ENCODE measurements at regions of chr18 and their contacts with region 1.

Region 1: GRCh38 chr18:3245853-3246634 is 1.6 kb upstream of the MYL12A start:
- DNase-seq: peak; percentile 69 to 89 (median 86)
- H3K4me3 ChIP-seq: peak overlapping the region; percentile 22 to 100 (median 94)
- H3K27ac ChIP-seq: peak overlapping the region; percentile 49 to 99 (median 97)
- H3K27me3 ChIP-seq: no peaks in the 10 kb centered on the region
- CTCF ChIP-seq: peak; percentile 79 to 98 (median 94)

Region 2: GRCh38 chr18:2571200-2572143 is 674.6 kb before region 1 on chr18 and contains the starts of genes METTL4 and NDC80:
- intact Hi-C with region 1: loop called in 1 of 2 experiments (anchors 10 kb)
- DNase-seq: peak; percentile 74 to 90 (median 78)
- H3K4me3 ChIP-seq: peak within 1 kb of the TSS; percentile 55 to 97 (median 81)
- H3K27ac ChIP-seq: peak within 1 kb of the TSS; percentile 84 to 100 (median 98)
- H3K27me3 ChIP-seq: peaks cover 0 to 9% (median 0%) of the 10 kb centered on the region in 45 donors
- CTCF ChIP-seq: peak in 19 of 56 donors; percentile 5 to 53 (median 25)
- total RNA-seq, gene METTL4: 6.5 to 24.8 (median 13.3) TPM
- total RNA-seq, gene NDC80: 0.20 to 1.1 (median 0.42) TPM in 12 of 120 experiments, not detected in the others

Region 3: GRCh38 chr18:2655178-2655953 is 590.7 kb before region 1 on chr18 and contains the start of gene SMCHD1:
- intact Hi-C with region 1: loop called in 1 of 2 experiments (anchors 5 kb)
- DNase-seq: peak; percentile 79 to 93 (median 88)
- H3K4me3 ChIP-seq: peak within 1 kb of the TSS; percentile 60 to 100 (median 94)
- H3K27ac ChIP-seq: peak within 1 kb of the TSS; percentile 61 to 97 (median 92)
- H3K27me3 ChIP-seq: no peaks in the 10 kb centered on the region
- CTCF ChIP-seq: peak in 13 of 56 donors; percentile 8 to 51 (median 18)
- total RNA-seq, gene SMCHD1: 43.9 to 86.1 (median 62.2) TPM

Region 4: GRCh38 chr18:2932247-2933181 is 313.5 kb before region 1 on chr18:
- intact Hi-C with region 1: loop called (anchors 1 to 2 kb)
- DNase-seq: peak in 1 of 10 donors; percentile 39
- H3K4me3 ChIP-seq: no peak overlapping the region
- H3K27ac ChIP-seq: peak overlapping the region in 2 of 59 donors; percentile 7 to 41
- H3K27me3 ChIP-seq: no peaks in the 10 kb centered on the region
- CTCF ChIP-seq: peak; percentile 72 to 94 (median 84)

Region 5: DNA sequence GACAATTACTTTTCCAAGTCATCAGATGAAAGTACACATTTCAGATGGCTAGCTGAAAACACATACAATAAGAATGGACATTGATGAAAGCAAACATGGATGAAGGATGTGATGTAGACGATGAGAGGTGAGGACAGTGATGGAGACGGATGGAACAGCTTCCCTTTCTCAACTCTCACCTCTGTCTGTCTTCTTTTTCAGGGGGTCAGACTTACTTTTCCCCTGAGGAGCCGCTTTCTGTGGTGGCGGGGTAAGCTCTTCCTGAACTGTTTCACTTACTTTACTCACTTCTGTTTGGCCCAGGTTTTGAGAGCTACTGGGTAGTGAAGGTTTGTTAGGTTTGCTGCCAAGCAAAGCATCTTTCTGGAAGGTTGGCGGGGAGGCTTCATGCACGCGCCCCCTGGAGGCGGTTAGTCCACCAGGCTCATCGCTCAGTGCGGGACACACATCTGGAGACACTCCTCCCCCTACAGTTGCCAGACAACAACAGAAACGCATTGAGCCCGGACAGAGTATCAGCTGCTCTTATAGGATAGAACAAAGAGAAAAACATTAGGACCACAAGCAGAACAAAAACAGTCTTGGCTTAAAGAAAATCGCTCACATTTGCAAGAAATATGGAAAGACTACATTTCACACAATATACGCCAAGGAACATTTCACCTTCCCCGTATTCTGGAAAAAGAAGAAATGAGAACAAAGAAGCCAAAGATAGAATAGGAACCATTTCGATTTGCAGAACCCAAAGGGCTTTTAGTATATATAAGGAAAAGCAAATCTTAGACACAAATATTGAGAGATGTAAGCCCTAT is 116.8 kb before region 1 on chr18:
- intact Hi-C with region 1: loop called in 1 of 2 experiments (anchors 5 kb)
- DNase-seq: peak; percentile 48 to 95 (median 85)
- H3K4me3 ChIP-seq: peak overlapping the region in 34 of 59 donors; percentile 2 to 55 (median 34)
- H3K27ac ChIP-seq: peak overlapping the region in 51 of 59 donors; percentile 7 to 90 (median 71)
- H3K27me3 ChIP-seq: no peaks in the 10 kb centered on the region
- CTCF ChIP-seq: peak; percentile 36 to 93 (median 78)

Region 6: GRCh38 chr18:3151399-3152264 is 94.4 kb before region 1 on chr18:
- intact Hi-C with region 1: loop called (anchors 10 kb)
- DNase-seq: no peak
- H3K4me3 ChIP-seq: no peak overlapping the region
- H3K27ac ChIP-seq: no peak overlapping the region
- H3K27me3 ChIP-seq: no peaks in the 10 kb centered on the region
- CTCF ChIP-seq: peak; percentile 66 to 90 (median 82)

Region 7: GRCh38 chr18:3261371-3262246 is 15.6 kb after region 1 on chr18 and contains the start of gene MYL12B:
- intact Hi-C with region 1: loop called (anchors 2 kb)
- DNase-seq: peak; percentile 58 to 87 (median 74)
- H3K4me3 ChIP-seq: peak within 1 kb of the TSS; percentile 59 to 99 (median 88)
- H3K27ac ChIP-seq: peak within 1 kb of the TSS; percentile 80 to 100 (median 97)
- H3K27me3 ChIP-seq: no peaks in the 10 kb centered on the region
- CTCF ChIP-seq: peak in 37 of 56 donors; percentile 3 to 55 (median 28)
- total RNA-seq, gene MYL12B: 72.6 to 168 (median 118) TPM

Region 8: GRCh38 chr18:3966985-3967856 is 721.2 kb after region 1 on chr18:
- intact Hi-C with region 1: no loop called
- DNase-seq: no peak
- H3K4me3 ChIP-seq: no peak overlapping the region
- H3K27ac ChIP-seq: peak overlapping the region in 4 of 59 donors; percentile 1 to 42 (median 26)
- H3K27me3 ChIP-seq: peaks cover 0 to 4% (median 0%) of the 10 kb centered on the region in 45 donors
- CTCF ChIP-seq: no peak